MCF 10A (cell line): ENCODE measurements at regions of chr13 and their contacts with region 1.

Region 1: DNA sequence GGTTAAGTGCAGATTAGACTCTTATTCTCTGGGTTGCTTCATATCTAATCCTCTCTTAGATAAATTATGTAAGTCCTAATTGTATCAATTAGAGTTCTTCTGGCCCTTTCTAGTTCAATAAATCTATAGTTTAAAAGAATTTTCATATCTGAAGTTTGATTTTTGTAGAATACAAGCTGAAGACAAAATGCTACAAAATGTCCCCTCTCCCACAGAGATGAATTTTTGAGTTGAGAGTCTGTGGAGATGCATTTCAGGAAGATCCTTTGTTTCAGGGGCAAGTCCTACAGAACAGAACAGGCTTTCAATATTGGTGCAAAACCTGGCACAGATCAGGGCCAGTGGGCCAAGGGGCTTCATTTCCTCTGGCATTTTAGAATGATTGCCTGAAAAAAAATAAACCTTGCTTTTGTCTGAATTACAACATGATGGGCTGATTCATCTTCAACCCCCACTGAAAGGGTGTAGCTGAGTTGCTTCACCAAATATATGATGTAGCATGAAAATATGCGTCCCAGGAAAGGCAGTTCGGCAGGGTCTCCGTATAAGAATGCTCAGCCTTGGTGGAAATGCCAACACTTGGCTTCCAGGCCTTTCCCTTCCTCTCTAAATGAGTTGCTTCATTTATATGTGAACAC is 6.4 kb upstream of the IPO5 start:
- DNase-seq: peak; percentile 88
- H3K4me3 Mint-ChIP-seq: no peak overlapping the region
- H3K27ac Mint-ChIP-seq: peak overlapping the region; percentile 80
- H3K4me1 Mint-ChIP-seq: peaks cover 15% of the 10 kb centered on the region
- H3K27me3 Mint-ChIP-seq: no peaks in the 10 kb centered on the region
- CTCF ChIP-seq: no peak

Region 2: DNA sequence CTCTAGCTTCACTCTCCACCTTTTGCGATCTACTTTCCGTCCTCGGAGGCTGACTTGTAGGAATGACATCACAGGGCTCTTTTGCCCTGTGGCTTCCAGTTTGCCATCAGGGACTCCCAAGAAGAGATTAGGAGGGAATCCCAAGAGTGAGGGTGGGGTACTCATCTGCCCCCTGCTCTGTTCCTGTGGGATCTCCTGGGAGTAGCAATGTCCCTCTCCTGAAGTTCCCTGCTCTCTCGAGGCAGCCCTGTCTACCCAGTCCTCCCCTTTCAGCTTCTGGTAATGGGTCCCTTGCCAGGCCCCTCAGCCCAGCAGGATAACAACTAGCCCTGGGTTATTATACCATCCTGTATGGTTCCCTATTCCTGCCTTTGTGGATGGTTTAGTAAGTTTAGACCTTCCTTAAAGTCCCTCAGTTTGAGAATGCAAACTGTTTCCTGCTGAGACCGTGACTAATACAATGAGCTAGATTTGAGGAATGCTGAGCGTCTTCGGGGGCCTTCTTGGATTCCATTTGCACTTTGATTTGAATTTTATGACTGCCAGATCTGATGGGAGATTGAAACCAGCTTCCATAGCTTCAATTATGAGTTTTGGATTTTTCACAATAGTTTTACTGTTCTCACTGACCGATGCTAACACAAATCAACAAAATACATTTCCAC is 67.3 kb before region 1 on chr13:
- CTCF ChIA-PET with region 1: no interaction called
- POLR2A ChIA-PET with region 1: no interaction called
- intact Hi-C with region 1: loop called (anchors 10 kb)
- DNase-seq: peak; percentile 45
- H3K4me3 Mint-ChIP-seq: no peak overlapping the region
- H3K27ac Mint-ChIP-seq: no peak overlapping the region
- H3K4me1 Mint-ChIP-seq: peaks cover 8% of the 10 kb centered on the region
- H3K27me3 Mint-ChIP-seq: no peaks in the 10 kb centered on the region
- CTCF ChIP-seq: no peak

Region 3: GRCh38 chr13:97975848-97976609 is 29.0 kb after region 1 on chr13:
- CTCF ChIA-PET with region 1: no interaction called
- POLR2A ChIA-PET with region 1: interaction called, 4 read pairs
- intact Hi-C with region 1: loop called (anchors 2 kb)
- DNase-seq: peak; percentile 89
- H3K4me3 Mint-ChIP-seq: peak overlapping the region; percentile 91
- H3K27ac Mint-ChIP-seq: peak overlapping the region; percentile 95
- H3K4me1 Mint-ChIP-seq: peaks cover 8% of the 10 kb centered on the region
- H3K27me3 Mint-ChIP-seq: no peaks in the 10 kb centered on the region
- CTCF ChIP-seq: no peak